ENCODE measurements at regions of chr5 and their contacts with region 1.

Region 1: DNA sequence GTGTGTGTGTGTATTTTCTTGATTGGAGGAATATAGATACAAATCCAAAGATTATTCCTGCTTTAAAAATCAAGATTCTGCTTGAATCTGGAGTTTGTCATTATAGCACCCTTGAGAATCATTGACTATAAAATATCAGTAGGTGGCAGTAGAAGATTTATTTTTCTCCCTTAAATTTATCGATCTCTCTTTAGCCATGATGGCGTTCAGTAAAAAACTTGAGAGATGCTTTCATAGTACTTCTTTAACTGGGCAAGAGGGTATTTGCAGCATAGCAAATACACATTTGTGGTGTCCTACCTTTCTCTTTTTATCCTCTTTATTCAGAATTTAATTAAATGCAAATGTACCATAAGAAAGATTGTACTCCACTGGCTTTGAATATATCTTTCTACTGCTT is 307.7 kb downstream of the ADGRV1 start:
- DNase-seq: peak; percentile 38
- CTCF ChIP-seq: peak; percentile 9

Region 2: DNA sequence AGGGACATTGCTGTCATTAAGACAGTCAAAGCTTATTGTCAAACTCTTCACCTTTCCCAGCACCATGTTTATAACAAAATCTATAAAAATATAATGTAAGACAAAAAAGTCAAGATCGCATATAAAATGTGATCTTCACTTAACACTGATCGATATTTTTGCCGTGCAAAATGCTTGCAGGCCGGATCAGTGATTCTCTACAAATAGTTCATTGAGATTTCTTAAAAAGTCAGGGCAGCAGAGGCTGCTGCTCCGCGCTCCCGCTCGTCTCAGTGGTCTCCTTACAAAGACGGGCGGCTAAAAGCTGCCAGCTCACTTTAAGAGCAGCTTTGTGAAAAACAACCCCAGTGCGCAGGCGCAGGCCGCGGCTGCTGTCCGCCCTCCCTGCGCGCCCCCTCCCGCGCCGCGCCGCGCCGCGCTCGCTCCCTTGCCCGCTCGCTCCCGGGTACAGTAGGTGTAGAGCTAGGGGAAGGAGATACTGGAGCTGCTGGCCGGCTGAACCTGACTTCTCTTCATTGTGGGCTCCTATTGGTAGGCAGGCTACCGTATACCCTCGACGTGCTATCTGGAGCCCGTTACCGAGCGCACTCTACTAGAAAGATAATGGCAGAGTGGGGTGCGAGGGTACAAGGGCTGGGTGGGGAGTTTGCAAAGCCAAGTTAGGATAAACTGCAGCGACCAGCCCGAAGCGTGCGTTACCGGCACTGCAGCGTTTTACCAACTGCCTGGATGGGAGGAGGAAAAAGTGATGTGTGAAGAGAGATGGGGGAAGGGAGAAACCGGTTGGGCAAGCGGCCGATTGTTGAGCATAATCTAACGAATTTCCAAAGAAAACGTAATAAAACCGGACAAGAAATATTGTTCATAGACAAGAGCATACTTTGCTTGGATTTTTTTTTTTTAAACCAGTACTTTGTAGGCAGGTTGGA is 517.0 kb after region 1 on chr5 and contains the start of gene ARRDC3:
- in situ Hi-C with region 1: loop called (anchors 25 kb)
- DNase-seq: peak; percentile 85
- CTCF ChIP-seq: no peak

Measured in GM13976 (cell line).